ENCODE measurements at regions of chr9 and their contacts with region 1.

Region 1: GRCh38 chr9:1320607-1321195 is 270.5 kb downstream of the DMRT2 start:
- DNase-seq: no peak
- H3K4me3 ChIP-seq: no peak overlapping the region
- H3K27ac ChIP-seq: no peak overlapping the region
- H3K4me1 ChIP-seq: no peaks in the 10 kb centered on the region
- H3K27me3 ChIP-seq: no peaks in the 10 kb centered on the region
- CTCF ChIP-seq: no peak
- EP300 ChIP-seq: no peak
- POLR2A ChIP-seq: no peak

Region 2: GRCh38 chr9:1373085-1373844 is 52.6 kb after region 1 on chr9:
- in situ Hi-C with region 1: no loop called
- intact Hi-C with region 1: loop called (anchors 2 kb)
- DNase-seq: no peak
- H3K4me3 ChIP-seq: no peak overlapping the region
- H3K27ac ChIP-seq: no peak overlapping the region
- H3K4me1 ChIP-seq: no peaks in the 10 kb centered on the region
- H3K27me3 ChIP-seq: no peaks in the 10 kb centered on the region
- CTCF ChIP-seq: no peak
- EP300 ChIP-seq: no peak
- POLR2A ChIP-seq: no peak